ENCODE measurements at regions of chr20 and their contacts with region 1.

Region 1: DNA sequence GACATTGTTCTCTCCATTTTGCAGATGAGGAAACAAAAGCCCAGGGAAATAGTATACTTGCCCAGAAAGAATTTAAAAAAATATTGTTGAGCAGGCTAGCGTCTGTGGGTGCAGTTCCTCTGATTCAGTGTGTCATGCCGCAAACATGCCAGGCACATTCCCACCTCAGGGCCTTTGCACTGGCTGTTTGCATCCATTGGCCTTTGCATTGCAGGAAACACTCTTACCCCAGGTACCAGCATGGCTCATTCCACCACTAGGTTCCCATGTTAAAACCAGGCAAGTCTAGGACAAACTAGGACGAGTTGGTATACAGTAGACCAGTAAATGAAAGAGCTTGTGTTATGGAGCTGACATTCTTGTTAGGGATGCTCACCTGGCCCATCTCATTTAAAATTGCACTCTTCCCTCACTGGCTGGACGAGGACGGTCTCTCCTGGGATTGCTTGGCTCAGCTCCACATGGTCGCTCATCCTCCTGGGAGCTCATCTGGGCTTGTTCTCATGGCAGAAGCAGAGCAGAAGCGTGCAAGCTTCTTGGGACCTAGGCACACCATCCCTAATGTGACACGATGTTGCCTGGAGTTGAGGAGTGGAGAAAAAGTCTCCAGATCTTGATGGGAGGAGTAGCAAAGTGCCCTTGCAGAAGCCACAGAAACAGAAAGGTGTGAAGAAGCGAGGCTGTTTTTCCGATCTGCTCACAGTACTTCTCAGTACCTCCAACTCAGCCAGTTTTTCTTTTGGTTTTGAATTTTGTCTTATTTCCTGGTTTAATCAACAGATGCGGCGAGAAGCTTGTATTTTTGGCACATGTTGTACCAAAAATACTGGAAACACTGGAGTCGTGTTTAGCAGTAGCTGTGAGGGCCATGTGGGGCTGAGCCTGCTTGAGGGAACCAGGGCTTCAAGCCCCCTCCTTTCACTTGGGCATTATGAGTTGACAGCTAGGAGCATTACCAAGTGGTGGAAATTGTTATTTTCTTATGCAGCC is 13.9 kb downstream of the ZNF831 start:
- DNase-seq: peak; percentile 54 to 75 (median 59)
- H3K4me3 ChIP-seq: no peak overlapping the region
- H3K4me3 Mint-ChIP-seq: peak overlapping the region; percentile 67 to 88 (median 78)
- H3K27ac ChIP-seq: peak overlapping the region; percentile 68
- H3K27ac Mint-ChIP-seq: peak overlapping the region; percentile 88 to 98 (median 96)
- H3K4me1 ChIP-seq: peaks cover 84% of the 10 kb centered on the region
- H3K4me1 Mint-ChIP-seq: peaks cover 70 to 98% (median 86%) of the 10 kb centered on the region in 4 donors
- H3K27me3 ChIP-seq: no peaks in the 10 kb centered on the region
- H3K27me3 Mint-ChIP-seq: no peaks in the 10 kb centered on the region

Region 2: GRCh38 chr20:58810116-58810878 is 367.3 kb before region 1 on chr20:
- CTCF ChIA-PET with region 1: no interaction called
- POLR2A ChIA-PET with region 1: no interaction called
- intact Hi-C with region 1: no loop called
- DNase-seq: no peak
- H3K4me3 ChIP-seq: no peak overlapping the region
- H3K4me3 Mint-ChIP-seq: peak overlapping the region in 1 of 8 donors; percentile 17
- H3K27ac ChIP-seq: no peak overlapping the region
- H3K27ac Mint-ChIP-seq: no peak overlapping the region
- H3K4me1 ChIP-seq: no peaks in the 10 kb centered on the region
- H3K4me1 Mint-ChIP-seq: peaks cover 0 to 3% (median 0%) of the 10 kb centered on the region in 4 donors
- H3K27me3 ChIP-seq: no peaks in the 10 kb centered on the region
- H3K27me3 Mint-ChIP-seq: peaks cover 19 to 21% of the 10 kb centered on the region in 2 donors

Region 3: GRCh38 chr20:59149651-59150504 is 27.7 kb before region 1 on chr20:
- CTCF ChIA-PET with region 1: interaction called, 8 read pairs
- POLR2A ChIA-PET with region 1: interaction called, 352 read pairs
- intact Hi-C with region 1: no loop called
- DNase-seq: peak; percentile 88 to 93 (median 91)
- H3K4me3 ChIP-seq: peak overlapping the region in 1 of 2 donors; percentile 2
- H3K4me3 Mint-ChIP-seq: peak overlapping the region; percentile 73 to 91 (median 80)
- H3K27ac ChIP-seq: peak overlapping the region; percentile 93
- H3K27ac Mint-ChIP-seq: peak overlapping the region; percentile 96 to 100 (median 100)
- H3K4me1 ChIP-seq: peaks cover 92% of the 10 kb centered on the region
- H3K4me1 Mint-ChIP-seq: peaks cover 72 to 97% (median 88%) of the 10 kb centered on the region in 4 donors
- H3K27me3 ChIP-seq: no peaks in the 10 kb centered on the region
- H3K27me3 Mint-ChIP-seq: no peaks in the 10 kb centered on the region

Region 4: DNA sequence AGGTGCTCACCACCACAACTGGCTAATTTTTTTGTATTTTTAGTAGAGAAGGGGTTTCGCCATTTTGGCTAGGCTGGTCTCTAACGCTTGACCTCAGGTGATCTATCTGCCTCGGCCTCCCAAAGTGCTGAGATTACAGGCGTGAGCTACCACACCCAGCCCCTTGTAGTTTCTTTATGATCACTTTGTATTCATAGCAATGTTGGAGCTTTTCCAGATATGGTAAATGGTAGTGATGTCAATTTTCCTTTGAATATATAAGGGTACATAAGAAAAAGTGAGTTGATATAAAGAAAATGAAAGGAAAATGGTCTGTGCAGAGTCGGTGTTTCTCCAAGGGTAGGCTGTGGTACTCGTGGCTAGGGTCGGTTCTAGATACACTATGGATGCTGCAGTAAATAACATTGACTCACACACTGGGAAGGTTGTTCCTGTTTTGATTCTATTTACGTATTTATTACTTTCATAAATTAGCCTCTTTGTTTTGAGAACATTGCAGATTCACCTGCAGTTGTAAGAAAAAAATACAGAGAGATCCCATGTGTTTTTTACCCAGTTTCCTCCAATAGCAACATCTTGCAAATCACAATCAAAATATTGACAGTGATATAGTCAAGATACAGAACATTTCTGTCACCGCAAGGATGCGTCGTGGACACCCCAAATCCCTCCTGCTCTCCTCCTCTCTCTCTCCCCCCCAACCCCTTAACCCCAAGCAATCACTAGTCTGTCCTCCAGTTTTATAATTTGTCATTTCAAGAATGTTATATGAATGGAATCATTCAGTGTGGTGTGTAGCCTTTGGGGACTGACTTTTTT is 11.5 kb before region 1 on chr20:
- CTCF ChIA-PET with region 1: interaction called, 4 read pairs
- POLR2A ChIA-PET with region 1: interaction called, 105 read pairs
- intact Hi-C with region 1: loop called (anchors 1 kb)
- DNase-seq: peak; percentile 70 to 83 (median 80)
- H3K4me3 ChIP-seq: peak overlapping the region; percentile 61 to 64
- H3K4me3 Mint-ChIP-seq: peak overlapping the region; percentile 84 to 96 (median 88)
- H3K27ac ChIP-seq: peak overlapping the region; percentile 97
- H3K27ac Mint-ChIP-seq: peak overlapping the region; percentile 97 to 99 (median 99)
- H3K4me1 ChIP-seq: peaks cover 88% of the 10 kb centered on the region
- H3K4me1 Mint-ChIP-seq: peaks cover 72 to 98% (median 82%) of the 10 kb centered on the region in 4 donors
- H3K27me3 ChIP-seq: no peaks in the 10 kb centered on the region
- H3K27me3 Mint-ChIP-seq: no peaks in the 10 kb centered on the region

Region 5: GRCh38 chr20:59222253-59223181 is 45.0 kb after region 1 on chr20:
- CTCF ChIA-PET with region 1: no interaction called
- POLR2A ChIA-PET with region 1: no interaction called
- intact Hi-C with region 1: no loop called
- DNase-seq: peak; percentile 75 to 79 (median 77)
- H3K4me3 ChIP-seq: peak overlapping the region in 1 of 2 donors; percentile 30
- H3K4me3 Mint-ChIP-seq: peak overlapping the region; percentile 78 to 86 (median 83)
- H3K27ac ChIP-seq: peak overlapping the region; percentile 36
- H3K27ac Mint-ChIP-seq: peak overlapping the region; percentile 54 to 93 (median 82)
- H3K4me1 ChIP-seq: peaks cover 20% of the 10 kb centered on the region
- H3K4me1 Mint-ChIP-seq: peaks cover 9 to 32% (median 19%) of the 10 kb centered on the region in 4 donors
- H3K27me3 ChIP-seq: no peaks in the 10 kb centered on the region
- H3K27me3 Mint-ChIP-seq: no peaks in the 10 kb centered on the region